Thyroid gland (tissue), 4 donors: ENCODE measurements at regions of chr4 and their contacts with region 1.

Region 1: DNA sequence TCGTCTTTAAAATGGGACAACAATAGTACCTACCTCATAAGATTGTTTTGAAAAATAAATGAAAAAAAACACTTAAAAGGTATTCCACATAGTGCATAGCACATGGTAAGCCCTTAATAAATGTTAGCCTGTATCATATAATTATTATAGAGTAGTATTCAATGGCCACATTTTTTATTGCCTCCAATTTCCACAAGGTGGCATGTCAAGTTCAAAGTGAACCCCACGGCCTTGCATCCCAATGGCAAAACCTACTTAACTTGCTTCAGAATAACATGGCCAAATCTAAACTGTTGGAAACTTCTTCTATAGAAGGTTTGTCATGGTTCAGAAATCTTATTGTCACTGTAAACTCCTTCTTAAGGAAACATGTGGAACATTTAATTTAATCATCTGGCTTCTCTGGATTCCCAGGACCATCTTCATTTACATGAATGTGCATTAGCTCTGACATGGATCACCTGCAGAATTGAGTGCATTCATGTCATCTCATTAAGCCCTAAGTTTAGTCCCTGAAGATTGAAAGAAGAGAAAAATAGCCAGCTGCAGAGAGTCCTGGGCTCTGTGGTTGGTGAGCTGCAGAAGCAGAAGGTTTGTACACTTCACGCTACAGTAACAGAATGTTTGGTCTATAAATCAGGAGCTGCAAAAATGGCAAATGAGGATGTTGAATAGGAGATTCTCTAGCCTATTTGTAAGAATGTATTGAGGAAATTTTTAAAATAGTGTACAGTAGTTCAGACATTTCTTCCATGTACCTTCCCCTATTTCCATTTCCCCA is 61.0 kb downstream of the ANXA3 start:
- DNase-seq: peak; percentile 41 to 44
- H3K4me3 ChIP-seq: no peak overlapping the region
- H3K27ac ChIP-seq: no peak overlapping the region
- H3K4me1 ChIP-seq: no peaks in the 10 kb centered on the region
- H3K27me3 ChIP-seq: no peaks in the 10 kb centered on the region
- CTCF ChIP-seq: peak; percentile 29 to 81 (median 63)
- POLR2A ChIP-seq: no peak

Region 2: DNA sequence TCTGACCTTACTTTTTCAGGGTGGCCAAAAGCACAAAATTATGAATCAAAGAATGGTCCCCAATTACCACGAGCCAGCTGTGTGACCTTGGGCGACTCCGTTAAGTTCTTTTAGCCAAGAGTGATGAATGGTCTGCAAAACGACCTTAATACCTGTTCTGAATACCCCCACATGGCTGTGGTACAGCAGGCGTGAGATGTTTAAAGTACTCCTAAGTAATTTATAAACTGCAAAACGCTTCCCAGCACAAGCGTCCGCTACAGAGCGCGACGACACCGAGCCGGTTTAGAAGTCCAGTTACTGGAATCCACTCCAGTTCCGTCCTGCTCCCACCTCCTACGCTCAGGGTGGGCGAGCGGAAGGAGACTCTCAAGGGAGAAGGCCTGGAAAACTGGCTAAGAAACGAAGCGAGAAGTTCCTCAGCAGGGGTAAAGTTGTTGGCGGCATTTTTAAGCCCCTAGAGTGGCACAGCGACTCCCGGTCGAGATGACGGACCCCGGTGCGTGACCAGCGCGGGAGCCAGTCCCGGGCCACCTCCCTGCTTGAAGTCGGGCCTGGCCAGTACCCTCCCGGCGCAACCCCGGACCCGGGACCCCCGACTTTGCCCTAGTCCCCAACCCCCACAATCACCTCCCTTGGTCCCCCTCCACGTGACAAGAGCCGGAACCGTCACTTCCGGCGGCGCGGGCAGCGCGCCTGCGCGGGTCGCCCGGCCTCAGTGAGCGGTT is 162.9 kb after region 1 on chr4:
- intact Hi-C with region 1: loop called (anchors 5 kb)
- DNase-seq: peak; percentile 88 to 90
- H3K4me3 ChIP-seq: peak overlapping the region; percentile 16 to 99 (median 79)
- H3K27ac ChIP-seq: peak overlapping the region; percentile 98 to 99 (median 98)
- H3K4me1 ChIP-seq: peaks cover 19 to 20% of the 10 kb centered on the region in 2 donors
- H3K27me3 ChIP-seq: no peaks in the 10 kb centered on the region
- CTCF ChIP-seq: no peak
- POLR2A ChIP-seq: peak in 1 of 2 donors; percentile 53

Region 3: DNA sequence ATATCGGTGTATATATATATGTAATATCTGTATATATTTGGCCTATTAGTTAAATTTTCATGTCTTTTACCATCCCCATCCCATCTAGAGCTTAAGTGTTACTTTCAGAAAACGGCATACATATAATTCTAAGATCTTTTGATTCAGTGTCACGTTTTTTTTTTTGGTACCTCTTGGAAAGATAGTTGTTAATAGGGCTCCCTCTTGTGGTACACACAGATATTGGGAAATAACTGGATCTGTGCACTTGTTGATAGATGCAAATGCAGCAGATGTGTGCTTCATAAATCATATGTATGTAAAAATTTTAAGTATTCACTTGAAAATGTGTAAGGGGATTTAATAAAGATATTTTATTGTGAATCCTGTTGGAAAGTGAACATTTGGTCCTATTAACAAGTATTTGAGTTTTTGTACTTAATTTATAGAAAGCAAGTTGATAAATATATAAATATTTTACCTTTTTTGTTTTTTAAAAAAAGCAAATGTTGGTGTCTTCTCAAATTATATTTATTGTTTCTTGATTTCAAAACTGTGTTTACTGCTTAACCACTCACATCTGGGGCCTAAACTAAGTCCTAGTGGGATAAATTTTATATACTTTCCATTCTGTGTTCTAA is 251.9 kb after region 1 on chr4:
- intact Hi-C with region 1: loop called (anchors 5 kb)
- DNase-seq: no peak
- H3K4me3 ChIP-seq: no peak overlapping the region
- H3K27ac ChIP-seq: no peak overlapping the region
- H3K4me1 ChIP-seq: no peaks in the 10 kb centered on the region
- H3K27me3 ChIP-seq: no peaks in the 10 kb centered on the region
- CTCF ChIP-seq: peak; percentile 42 to 89 (median 66)
- POLR2A ChIP-seq: no peak

Region 4: DNA sequence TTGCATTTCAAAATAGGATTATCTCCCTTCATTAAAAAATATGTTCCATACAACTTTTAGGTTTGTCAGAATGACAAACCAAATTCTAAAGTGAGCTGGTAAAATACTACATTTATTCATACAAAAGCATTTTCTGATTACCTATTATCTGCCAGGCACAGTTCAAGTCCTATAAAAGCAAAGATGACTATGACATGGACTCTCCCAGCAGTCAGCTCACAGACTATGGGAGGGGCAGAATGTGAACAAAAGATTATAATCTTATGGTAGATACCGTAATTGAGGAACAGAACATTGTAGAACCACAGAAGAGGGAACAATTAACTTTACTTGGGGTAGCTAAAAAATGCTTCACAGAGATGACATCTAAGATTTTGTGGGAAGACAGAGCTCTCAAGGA is 314.2 kb after region 1 on chr4:
- intact Hi-C with region 1: no loop called
- DNase-seq: no peak
- H3K4me3 ChIP-seq: no peak overlapping the region
- H3K27ac ChIP-seq: no peak overlapping the region
- H3K4me1 ChIP-seq: no peaks in the 10 kb centered on the region
- H3K27me3 ChIP-seq: no peaks in the 10 kb centered on the region
- CTCF ChIP-seq: no peak
- POLR2A ChIP-seq: no peak